CD4-positive, alpha-beta memory T cell (primary cell): ENCODE measurements at regions of chr11 and their contacts with region 1.

Region 1: GRCh38 chr11:82718307-82718706 is 15.4 kb downstream of the FAM181B start:
- DNase-seq: peak in 2 of 5 donors; percentile 15 to 29
- H3K4me3 ChIP-seq: no peak overlapping the region
- H3K4me3 Mint-ChIP-seq: no peak overlapping the region
- H3K27ac ChIP-seq: no peak overlapping the region
- H3K27ac Mint-ChIP-seq: no peak overlapping the region
- H3K4me1 ChIP-seq: no peaks in the 10 kb centered on the region
- H3K4me1 Mint-ChIP-seq: no peaks in the 10 kb centered on the region
- H3K27me3 ChIP-seq: no peaks in the 10 kb centered on the region
- H3K27me3 Mint-ChIP-seq: peaks cover under 1 to 2% of the 10 kb centered on the region in 2 donors

Region 2: DNA sequence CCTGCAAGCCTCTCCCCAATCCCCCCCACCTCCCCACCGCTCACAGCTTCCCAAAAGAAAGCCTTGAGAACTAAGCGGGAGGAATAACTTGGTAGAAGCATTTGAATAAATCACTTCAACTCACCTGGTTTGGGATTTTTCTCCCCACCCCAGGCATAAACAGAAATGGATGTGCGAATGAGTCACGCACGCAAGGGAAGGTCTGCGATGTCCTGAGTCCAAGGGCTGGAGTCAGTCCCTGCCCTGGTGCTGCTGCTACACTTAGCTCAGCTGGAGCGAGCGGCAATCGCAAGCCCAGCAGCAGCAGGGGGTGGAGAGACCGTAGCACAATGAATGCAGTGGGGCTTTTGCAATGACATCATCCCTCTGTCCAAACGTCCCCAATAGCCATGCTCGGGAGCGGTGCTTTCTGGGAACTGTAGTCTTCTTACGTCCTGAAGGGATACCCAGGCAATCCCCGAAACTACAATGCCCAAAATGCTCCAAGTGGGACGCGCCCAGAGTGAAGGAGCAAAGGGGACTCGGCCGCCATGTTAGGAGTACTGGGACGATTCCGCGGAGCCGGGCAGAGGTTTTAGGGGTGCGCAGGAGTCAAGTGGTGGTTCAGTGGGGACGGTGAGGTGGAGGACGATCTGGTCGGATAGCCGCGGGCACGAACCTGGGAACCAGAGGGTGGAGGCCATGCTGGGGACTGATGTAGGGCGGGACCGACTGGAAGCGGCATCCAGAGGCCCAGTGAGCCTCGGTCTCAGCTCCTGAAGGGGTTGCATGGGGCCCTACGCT is 353.5 kb after region 1 on chr11 and contains the start of gene RAB30:
- CTCF ChIA-PET with region 1: no interaction called
- POLR2A ChIA-PET with region 1: no interaction called
- intact Hi-C with region 1: no loop called
- DNase-seq: peak; percentile 94 to 99 (median 96)
- H3K4me3 ChIP-seq: peak within 1 kb of the TSS; percentile 89 to 91
- H3K4me3 Mint-ChIP-seq: no peak within 1 kb of the TSS
- H3K27ac ChIP-seq: peak within 1 kb of the TSS; percentile 97
- H3K27ac Mint-ChIP-seq: no peak within 1 kb of the TSS
- H3K4me1 ChIP-seq: peaks cover 60% of the 10 kb centered on the region
- H3K4me1 Mint-ChIP-seq: peaks cover 6 to 39% (median 24%) of the 10 kb centered on the region in 4 donors
- H3K27me3 ChIP-seq: no peaks in the 10 kb centered on the region
- H3K27me3 Mint-ChIP-seq: no peaks in the 10 kb centered on the region
- total RNA-seq, gene RAB30: 12.3 to 14.1 TPM

Region 3: DNA sequence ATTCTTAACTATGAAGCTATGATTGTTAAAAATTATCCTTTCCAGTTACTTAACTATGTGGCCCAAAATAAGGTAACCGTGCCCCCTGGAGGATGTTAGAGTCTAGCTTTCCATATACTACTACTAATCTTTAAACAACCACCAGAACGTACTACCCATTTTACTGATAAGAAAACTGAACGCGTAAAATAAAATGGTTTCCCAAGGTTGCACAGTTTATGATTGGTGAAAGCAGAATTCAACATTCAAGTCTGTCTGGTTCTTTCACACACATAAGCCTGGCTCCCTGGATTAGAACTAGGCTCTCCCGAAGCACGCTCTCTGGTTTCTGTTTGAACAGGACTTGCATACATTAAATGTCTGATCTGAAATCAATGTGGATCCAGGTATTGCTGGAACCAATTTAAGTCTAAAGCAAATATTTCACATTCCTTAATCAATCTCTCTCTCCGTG is 1005.7 kb after region 1 on chr11:
- CTCF ChIA-PET with region 1: interaction called, 3 read pairs
- POLR2A ChIA-PET with region 1: no interaction called
- intact Hi-C with region 1: loop called (anchors 5 kb)
- DNase-seq: peak in 3 of 5 donors; percentile 3 to 9 (median 4)
- H3K4me3 ChIP-seq: no peak overlapping the region
- H3K4me3 Mint-ChIP-seq: peak overlapping the region; percentile 40 to 87 (median 68)
- H3K27ac ChIP-seq: no peak overlapping the region
- H3K27ac Mint-ChIP-seq: no peak overlapping the region
- H3K4me1 ChIP-seq: no peaks in the 10 kb centered on the region
- H3K4me1 Mint-ChIP-seq: peaks cover 6 to 9% (median 7%) of the 10 kb centered on the region in 4 donors
- H3K27me3 ChIP-seq: no peaks in the 10 kb centered on the region
- H3K27me3 Mint-ChIP-seq: peaks cover 2 to 4% of the 10 kb centered on the region in 2 donors